ENCODE measurements at regions of chr13 and their contacts with region 1.

Region 1: DNA sequence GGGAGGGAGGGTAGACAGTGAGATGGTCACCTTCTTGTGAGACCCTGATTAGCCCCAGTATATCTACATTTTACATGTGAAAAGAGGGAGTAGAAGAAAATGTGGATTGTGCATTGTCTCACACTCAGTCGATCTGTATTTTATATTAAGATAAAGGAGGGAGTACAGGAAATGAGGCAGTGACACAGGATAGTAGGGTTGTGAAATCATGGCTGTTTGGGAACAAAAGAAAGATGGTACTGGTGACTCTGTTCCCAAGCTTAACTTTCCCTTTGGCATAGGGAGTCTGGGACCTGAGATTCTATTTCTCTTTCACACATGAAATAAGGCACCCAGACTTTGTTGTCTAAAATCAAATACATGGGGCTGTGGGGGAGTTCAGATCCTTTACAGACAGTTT is 194.7 kb downstream of the ABCC4 start:
- DNase-seq: no peak
- ATAC-seq: peak; percentile 75 to 76
- H3K4me3 ChIP-seq: no peak overlapping the region
- H3K27ac ChIP-seq: peak overlapping the region in 2 of 4 donors; percentile 8 to 56
- H3K4me1 ChIP-seq: no peaks in the 10 kb centered on the region
- H3K27me3 ChIP-seq: no peaks in the 10 kb centered on the region
- CTCF ChIP-seq: no peak
- POLR2A ChIP-seq: no peak

Region 2: GRCh38 chr13:95060014-95060519 is 46.5 kb before region 1 on chr13:
- in situ Hi-C with region 1: no loop called
- intact Hi-C with region 1: loop called (anchors 2 kb)
- DNase-seq: no peak
- ATAC-seq: peak; percentile 65 to 83
- H3K4me3 ChIP-seq: no peak overlapping the region
- H3K27ac ChIP-seq: peak overlapping the region; percentile 41 to 84 (median 65)
- H3K4me1 ChIP-seq: peaks cover 19 to 21% of the 10 kb centered on the region in 2 donors
- H3K27me3 ChIP-seq: no peaks in the 10 kb centered on the region
- CTCF ChIP-seq: no peak
- POLR2A ChIP-seq: no peak

Region 3: DNA sequence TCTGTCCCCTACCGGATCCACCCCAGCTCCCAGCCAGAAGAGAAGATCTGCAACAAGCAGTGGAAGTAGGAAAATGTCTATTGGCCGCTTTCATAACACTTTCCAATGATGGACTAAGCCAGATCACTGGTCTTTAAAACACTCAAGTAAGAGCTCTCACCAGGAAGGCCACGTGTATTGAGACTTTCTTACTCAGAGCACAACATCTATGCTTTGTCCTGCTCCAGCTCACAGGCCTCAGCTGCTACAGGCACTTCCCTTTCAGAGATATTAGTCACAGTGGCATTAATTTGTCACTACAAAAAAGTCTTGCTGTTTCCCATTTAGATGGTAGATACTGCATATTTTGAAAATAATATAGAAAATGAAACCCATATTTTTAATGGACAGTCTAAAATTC is 30.5 kb after region 1 on chr13:
- in situ Hi-C with region 1: no loop called
- intact Hi-C with region 1: no loop called
- DNase-seq: no peak
- ATAC-seq: no peak
- H3K4me3 ChIP-seq: no peak overlapping the region
- H3K27ac ChIP-seq: no peak overlapping the region
- H3K4me1 ChIP-seq: no peaks in the 10 kb centered on the region
- H3K27me3 ChIP-seq: no peaks in the 10 kb centered on the region
- CTCF ChIP-seq: no peak
- POLR2A ChIP-seq: no peak

Measured in gastrocnemius medialis (tissue), 4 donors.